IMR-90 (cell line): ENCODE measurements at regions of chr12 and their contacts with region 1.

Region 1: DNA sequence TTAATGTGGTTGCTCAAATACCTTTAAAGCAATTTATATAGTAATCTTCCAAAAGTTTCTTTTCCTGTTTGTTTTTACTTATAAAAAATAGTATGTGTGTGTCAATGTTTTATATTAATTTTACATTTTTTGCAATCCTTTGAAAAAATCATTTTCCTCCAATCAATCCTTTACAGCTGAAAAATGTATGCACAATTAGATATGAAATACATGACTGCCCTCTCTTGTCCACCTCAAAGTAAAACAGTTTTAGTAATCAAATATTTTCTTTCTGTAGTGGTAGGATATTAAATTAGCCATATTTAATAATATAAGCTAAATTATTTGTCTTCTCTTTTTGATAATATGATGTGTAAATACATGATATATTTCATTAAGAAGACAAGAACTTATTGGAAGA is 269.9 kb downstream of the ADAMTS20 start:
- DNase-seq: peak; percentile 65
- ATAC-seq: peak; percentile 22; the same call in 1 of the 2 replicates
- H3K4me3 ChIP-seq: no peak overlapping the region
- H3K27ac ChIP-seq: no peak overlapping the region
- H3K4me1 ChIP-seq: peaks cover 6% of the 10 kb centered on the region; the same call in 1 of the 2 replicates
- H3K27me3 ChIP-seq: no peaks in the 10 kb centered on the region
- CTCF ChIP-seq: peak; percentile 69
- POLR2A ChIP-seq: no peak
- RAD21 ChIP-seq: peak; percentile 78

Region 2: GRCh38 chr12:42325653-42326474 is 956.2 kb before region 1 on chr12 and contains the starts of genes PPHLN1 and ZCRB1:
- CTCF ChIA-PET with region 1: no interaction called
- POLR2A ChIA-PET with region 1: no interaction called
- dilution Hi-C with region 1: no loop called
- in situ Hi-C with region 1: loop called (anchors 25 kb)
- intact Hi-C with region 1: loop called (anchors 2 kb)
- DNase-seq: peak; percentile 71
- ATAC-seq: peak; percentile 97
- H3K4me3 ChIP-seq: peak within 1 kb of the TSS; percentile 97
- H3K27ac ChIP-seq: peak within 1 kb of the TSS; percentile 85
- H3K4me1 ChIP-seq: peaks cover 2% of the 10 kb centered on the region; the same call in 1 of the 2 replicates
- H3K27me3 ChIP-seq: no peaks in the 10 kb centered on the region
- CTCF ChIP-seq: no peak
- POLR2A ChIP-seq: peak; percentile 85
- RAD21 ChIP-seq: no peak
- total RNA-seq, gene PPHLN1: 50.7 and 96.9 TPM in 2 replicates
- total RNA-seq, gene ZCRB1: 28.1 and 33.1 TPM in 2 replicates

Region 3: GRCh38 chr12:42482445-42483237 is 799.5 kb before region 1 on chr12:
- CTCF ChIA-PET with region 1: interaction called, 12 read pairs
- POLR2A ChIA-PET with region 1: no interaction called
- dilution Hi-C with region 1: no loop called
- in situ Hi-C with region 1: loop called (anchors 5 kb)
- intact Hi-C with region 1: loop called (anchors 1 kb)
- DNase-seq: peak; percentile 65
- ATAC-seq: peak; percentile 80
- H3K4me3 ChIP-seq: peak overlapping the region; percentile 91
- H3K27ac ChIP-seq: peak overlapping the region; percentile 91
- H3K4me1 ChIP-seq: peaks cover 7% of the 10 kb centered on the region
- H3K27me3 ChIP-seq: no peaks in the 10 kb centered on the region
- CTCF ChIP-seq: peak; percentile 93
- POLR2A ChIP-seq: no peak
- RAD21 ChIP-seq: peak; percentile 82

Region 4: GRCh38 chr12:42568952-42569915 is 712.9 kb before region 1 on chr12:
- CTCF ChIA-PET with region 1: no interaction called
- POLR2A ChIA-PET with region 1: no interaction called
- dilution Hi-C with region 1: no loop called
- in situ Hi-C with region 1: no loop called
- intact Hi-C with region 1: loop called (anchors 5 kb)
- DNase-seq: peak; percentile 80
- ATAC-seq: peak; percentile 25; the same call in 1 of the 2 replicates
- H3K4me3 ChIP-seq: no peak overlapping the region
- H3K27ac ChIP-seq: no peak overlapping the region
- H3K4me1 ChIP-seq: peaks cover 20% of the 10 kb centered on the region
- H3K27me3 ChIP-seq: no peaks in the 10 kb centered on the region
- CTCF ChIP-seq: peak; percentile 69
- POLR2A ChIP-seq: no peak
- RAD21 ChIP-seq: peak; percentile 60

Region 5: DNA sequence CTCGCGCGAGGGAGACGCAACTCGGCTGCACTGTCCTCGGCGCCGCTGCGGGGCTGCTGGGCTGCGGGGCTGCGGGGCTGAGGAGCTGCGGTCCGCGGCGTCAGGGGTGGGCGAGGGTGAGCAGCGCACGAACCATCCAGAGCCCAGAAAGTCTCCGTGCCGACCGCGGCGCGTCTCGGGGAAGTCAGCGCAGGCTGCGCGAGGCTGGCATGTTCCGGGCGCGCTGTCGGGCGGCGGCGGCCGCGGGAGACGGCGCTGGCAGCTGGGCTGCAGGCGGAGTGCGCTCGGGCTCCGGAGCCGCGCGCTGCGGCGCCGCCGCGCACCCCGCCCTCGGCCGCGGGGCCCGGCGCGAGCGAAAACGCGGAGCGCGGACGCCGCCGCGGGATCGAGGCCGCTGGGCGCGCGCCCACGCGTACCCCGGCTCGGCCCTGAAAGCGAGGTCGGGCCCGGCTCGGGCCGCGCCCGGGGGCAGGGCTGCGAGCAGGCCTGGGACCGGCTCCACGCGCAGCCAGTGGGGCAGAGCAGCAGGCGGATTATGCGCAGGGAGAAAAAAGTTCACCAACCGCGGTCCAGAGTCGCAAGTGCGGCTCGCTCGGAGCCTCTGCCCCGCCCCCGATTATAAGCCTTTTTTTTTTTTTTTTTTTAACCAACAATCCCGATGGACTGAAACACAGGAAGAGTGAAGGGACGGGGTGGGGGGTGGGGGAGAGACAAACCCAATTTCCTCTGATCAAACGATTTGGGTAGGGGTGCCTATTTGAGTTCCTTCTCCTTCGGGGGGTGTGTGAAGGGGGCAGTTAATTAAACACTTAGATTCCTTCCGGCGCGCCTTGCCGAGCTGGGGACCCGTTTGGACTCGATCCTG is 692.4 kb before region 1 on chr12 and contains the start of gene PRICKLE1:
- CTCF ChIA-PET with region 1: interaction called, 4 read pairs
- POLR2A ChIA-PET with region 1: interaction called, 12 read pairs
- dilution Hi-C with region 1: no loop called
- in situ Hi-C with region 1: loop called (anchors 10 kb)
- intact Hi-C with region 1: loop called (anchors 2 kb)
- DNase-seq: peak; percentile 60
- ATAC-seq: peak; percentile 88
- H3K4me3 ChIP-seq: peak within 1 kb of the TSS; percentile 89
- H3K27ac ChIP-seq: peak within 1 kb of the TSS; percentile 58
- H3K4me1 ChIP-seq: peaks cover 17% of the 10 kb centered on the region
- H3K27me3 ChIP-seq: peaks cover 14% of the 10 kb centered on the region
- CTCF ChIP-seq: no peak
- POLR2A ChIP-seq: no peak
- RAD21 ChIP-seq: no peak; the same call in 1 of the 2 replicates
- total RNA-seq, gene PRICKLE1: 20.8 and 21.3 TPM in 2 replicates

Region 6: DNA sequence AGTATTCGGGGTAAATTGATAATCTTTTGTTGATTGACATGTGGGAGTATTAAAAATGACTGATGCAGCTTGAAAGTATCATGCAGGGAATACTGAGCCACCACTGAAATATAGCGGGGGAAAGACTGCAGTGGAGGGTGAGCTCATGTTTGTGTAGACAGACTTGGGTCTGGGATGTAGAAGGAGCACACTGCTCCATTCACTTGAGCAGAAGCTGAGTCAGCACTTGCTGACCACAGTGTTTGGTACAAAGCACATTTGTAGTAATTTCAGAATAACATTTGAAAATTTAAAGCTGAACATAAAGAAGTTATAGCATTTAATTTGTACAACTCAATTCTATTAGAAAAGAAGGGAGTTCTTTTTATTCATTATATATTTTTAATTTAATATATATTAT is 388.3 kb before region 1 on chr12:
- CTCF ChIA-PET with region 1: no interaction called
- POLR2A ChIA-PET with region 1: no interaction called
- dilution Hi-C with region 1: no loop called
- in situ Hi-C with region 1: no loop called
- intact Hi-C with region 1: no loop called
- DNase-seq: peak; percentile 32
- ATAC-seq: no peak
- H3K4me3 ChIP-seq: no peak overlapping the region
- H3K27ac ChIP-seq: no peak overlapping the region
- H3K4me1 ChIP-seq: no peaks in the 10 kb centered on the region
- H3K27me3 ChIP-seq: no peaks in the 10 kb centered on the region
- CTCF ChIP-seq: no peak
- POLR2A ChIP-seq: no peak
- RAD21 ChIP-seq: no peak

Region 7: DNA sequence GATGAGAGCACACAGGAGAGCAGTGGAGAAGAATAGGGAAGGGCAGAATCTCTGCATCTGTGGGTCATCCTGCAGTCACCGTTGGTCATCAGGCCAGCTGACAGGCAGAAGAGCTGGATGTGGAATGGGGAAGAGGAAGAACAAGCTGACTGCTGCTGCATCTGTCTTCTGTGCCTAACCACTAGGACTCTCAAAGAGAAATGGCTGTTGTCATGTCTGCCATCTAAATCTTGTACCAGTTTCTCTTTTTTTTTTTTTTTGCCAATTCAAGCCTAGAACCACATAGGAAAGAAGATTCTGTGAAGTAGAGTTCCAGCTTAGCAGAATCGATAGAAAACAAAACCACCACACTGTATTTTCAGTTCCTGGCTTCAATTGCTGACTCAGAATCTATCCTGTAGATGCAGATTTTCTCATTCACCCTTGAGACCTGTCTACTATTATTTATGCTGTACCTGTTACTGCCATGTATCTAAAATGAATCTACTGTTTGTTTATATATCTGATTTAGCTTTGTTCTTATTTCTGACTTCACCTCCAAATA is 270.7 kb before region 1 on chr12:
- CTCF ChIA-PET with region 1: no interaction called
- POLR2A ChIA-PET with region 1: no interaction called
- dilution Hi-C with region 1: no loop called
- in situ Hi-C with region 1: no loop called
- intact Hi-C with region 1: no loop called
- DNase-seq: no peak
- ATAC-seq: no peak
- H3K4me3 ChIP-seq: no peak overlapping the region
- H3K27ac ChIP-seq: no peak overlapping the region
- H3K4me1 ChIP-seq: no peaks in the 10 kb centered on the region
- H3K27me3 ChIP-seq: no peaks in the 10 kb centered on the region
- CTCF ChIP-seq: no peak
- POLR2A ChIP-seq: no peak
- RAD21 ChIP-seq: no peak

Region 8: GRCh38 chr12:43332977-43333640 is 51.0 kb after region 1 on chr12:
- CTCF ChIA-PET with region 1: no interaction called
- POLR2A ChIA-PET with region 1: no interaction called
- dilution Hi-C with region 1: no loop called
- in situ Hi-C with region 1: loop called (anchors 5 kb)
- intact Hi-C with region 1: loop called (anchors 2 kb)
- DNase-seq: peak; percentile 83
- ATAC-seq: peak; percentile 81
- H3K4me3 ChIP-seq: no peak overlapping the region
- H3K27ac ChIP-seq: no peak overlapping the region
- H3K4me1 ChIP-seq: peaks cover 7% of the 10 kb centered on the region
- H3K27me3 ChIP-seq: no peaks in the 10 kb centered on the region
- CTCF ChIP-seq: no peak
- POLR2A ChIP-seq: no peak
- RAD21 ChIP-seq: no peak

Region 9: GRCh38 chr12:44258246-44258645 is 976.1 kb after region 1 on chr12:
- CTCF ChIA-PET with region 1: no interaction called
- POLR2A ChIA-PET with region 1: no interaction called
- dilution Hi-C with region 1: no loop called
- in situ Hi-C with region 1: no loop called
- intact Hi-C with region 1: no loop called
- DNase-seq: no peak
- ATAC-seq: no peak
- H3K4me3 ChIP-seq: no peak overlapping the region
- H3K27ac ChIP-seq: no peak overlapping the region
- H3K4me1 ChIP-seq: no peaks in the 10 kb centered on the region
- H3K27me3 ChIP-seq: no peaks in the 10 kb centered on the region
- CTCF ChIP-seq: no peak
- POLR2A ChIP-seq: no peak
- RAD21 ChIP-seq: no peak